Activated CD8-positive, alpha-beta memory T cell treated with anti-CD3 and anti-CD28 coated beads, Interleukin-2, amount 10 ng/mL, durations not matched to agents 7 days and 5 days (primary cell): ENCODE measurements at regions of chr14 and their contacts with region 1.

Region 1: DNA sequence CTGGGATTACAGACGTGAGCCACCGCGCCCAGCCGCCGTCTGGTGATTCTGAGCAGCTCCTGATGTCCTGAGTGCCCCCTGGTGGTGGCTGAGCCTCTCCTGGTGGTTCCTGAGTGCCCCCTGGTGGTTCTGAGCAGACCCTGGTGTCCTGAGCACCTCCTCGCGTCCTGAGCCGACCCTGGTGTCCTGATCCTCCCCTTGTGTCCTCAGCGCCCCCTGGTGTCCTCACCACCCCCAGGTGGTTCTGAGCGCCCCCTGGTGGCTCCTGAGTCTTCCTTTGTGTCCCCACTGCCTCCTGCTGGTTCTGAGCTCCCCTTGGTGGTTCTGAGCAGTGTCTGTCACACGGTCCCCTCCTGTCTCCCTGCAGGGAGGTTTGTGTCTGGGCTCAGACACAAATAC is 1304.9 kb downstream of the TMEM121 start:
- DNase-seq: peak; percentile 70
- ATAC-seq: peak; percentile 56
- H3K4me3 Mint-ChIP-seq: no peak overlapping the region
- H3K27ac Mint-ChIP-seq: no peak overlapping the region
- H3K4me1 Mint-ChIP-seq: no peaks in the 10 kb centered on the region
- H3K27me3 Mint-ChIP-seq: peaks cover 39% of the 10 kb centered on the region

Region 2: GRCh38 chr14:106631879-106632278 is 199.4 kb before region 1 on chr14:
- CTCF ChIA-PET with region 1: no interaction called
- DNase-seq: no peak
- ATAC-seq: peak; percentile 41
- H3K4me3 Mint-ChIP-seq: no peak overlapping the region
- H3K27ac Mint-ChIP-seq: no peak overlapping the region
- H3K4me1 Mint-ChIP-seq: peaks cover 14% of the 10 kb centered on the region
- H3K27me3 Mint-ChIP-seq: peaks cover 65% of the 10 kb centered on the region

Region 3: GRCh38 chr14:106790189-106791036 is 40.9 kb before region 1 on chr14:
- CTCF ChIA-PET with region 1: interaction called, 27 read pairs
- DNase-seq: peak; percentile 85
- ATAC-seq: peak; percentile 65
- H3K4me3 Mint-ChIP-seq: no peak overlapping the region
- H3K27ac Mint-ChIP-seq: no peak overlapping the region
- H3K4me1 Mint-ChIP-seq: peaks cover 10% of the 10 kb centered on the region
- H3K27me3 Mint-ChIP-seq: peaks cover 27% of the 10 kb centered on the region

Region 4: DNA sequence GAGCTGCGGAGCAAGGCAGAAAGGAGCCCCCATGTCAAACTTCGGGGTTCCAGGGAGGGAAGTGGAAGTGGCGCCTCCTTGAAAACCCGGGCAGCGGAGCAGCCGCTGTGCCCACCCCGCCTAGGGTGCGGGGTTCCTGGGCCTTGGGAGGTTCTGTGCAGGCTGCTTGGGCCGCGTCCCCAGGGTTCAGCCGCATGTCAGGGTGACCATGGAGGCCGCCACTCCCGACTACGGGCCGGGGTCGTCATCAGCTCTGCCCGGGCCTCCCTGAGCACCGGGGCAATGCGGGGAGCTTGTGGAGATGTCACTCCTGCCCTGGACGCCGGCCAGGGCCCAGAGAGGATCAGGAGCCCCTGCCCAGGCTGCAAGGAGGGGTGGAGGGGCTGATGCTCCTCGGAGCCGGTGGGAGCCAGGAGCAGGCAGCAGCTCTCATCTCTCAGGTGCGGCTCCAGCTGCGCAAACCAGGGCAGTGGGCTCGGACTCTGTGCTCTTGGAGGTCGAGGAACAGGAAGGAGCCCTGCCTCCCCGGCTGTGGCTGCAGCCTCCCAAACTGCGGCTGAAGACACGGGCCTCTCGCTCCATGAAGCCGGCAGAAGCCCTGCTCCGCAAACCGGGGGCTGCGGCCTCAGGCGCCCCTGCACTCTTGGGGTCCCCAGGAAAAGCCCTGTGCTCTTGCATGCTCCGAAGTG is 18.4 kb before region 1 on chr14:
- CTCF ChIA-PET with region 1: interaction called, 18 read pairs
- DNase-seq: no peak
- ATAC-seq: no peak
- H3K4me3 Mint-ChIP-seq: no peak overlapping the region
- H3K27ac Mint-ChIP-seq: no peak overlapping the region
- H3K4me1 Mint-ChIP-seq: peaks cover 12% of the 10 kb centered on the region
- H3K27me3 Mint-ChIP-seq: peaks cover 38% of the 10 kb centered on the region

Region 5: GRCh38 chr14:106850913-106851825 is 19.8 kb after region 1 on chr14:
- CTCF ChIA-PET with region 1: interaction called, 35 read pairs
- DNase-seq: no peak
- ATAC-seq: no peak
- H3K4me3 Mint-ChIP-seq: no peak overlapping the region
- H3K27ac Mint-ChIP-seq: no peak overlapping the region
- H3K4me1 Mint-ChIP-seq: no peaks in the 10 kb centered on the region
- H3K27me3 Mint-ChIP-seq: peaks cover 40% of the 10 kb centered on the region